ENCODE measurements at regions of chr2 and their contacts with region 1.

Region 1: DNA sequence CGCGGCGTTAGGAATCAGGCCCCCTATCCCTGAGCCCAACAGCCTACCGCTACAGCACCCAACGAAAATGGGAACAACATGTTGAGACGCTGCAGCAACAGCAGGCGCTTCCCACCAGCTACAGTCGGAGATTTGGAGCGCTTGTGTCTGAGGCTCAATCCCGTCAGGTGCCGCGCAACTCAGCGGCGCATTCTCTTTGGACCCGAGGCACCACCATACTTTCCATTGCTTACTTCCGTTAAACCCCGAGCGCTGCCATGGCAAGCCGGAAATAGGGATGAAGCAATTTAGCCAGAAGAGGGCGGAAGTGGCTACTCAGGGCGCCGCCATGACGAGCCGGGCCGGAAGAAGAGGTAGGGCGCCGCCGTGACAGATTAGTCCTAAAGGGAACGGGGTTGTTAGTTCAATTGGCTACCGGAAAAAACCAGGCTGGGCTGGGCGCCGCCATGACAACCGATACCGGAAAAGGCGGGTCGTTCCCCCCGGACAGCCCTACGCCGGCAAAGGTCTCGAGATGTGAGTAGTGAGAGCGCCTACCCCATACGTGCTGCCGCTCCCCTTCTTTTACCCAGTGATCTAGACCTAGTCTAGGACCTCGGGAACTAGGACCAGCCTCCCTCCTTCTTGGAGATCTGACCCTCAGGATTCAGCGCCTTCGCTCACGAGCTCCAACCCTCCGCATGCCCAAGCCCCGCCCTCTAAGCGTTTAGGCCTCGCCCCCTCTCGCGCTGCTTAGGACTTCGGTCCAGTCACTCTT is at the start of gene CHCHD5:
- DNase-seq: peak; percentile 89 to 97
- ATAC-seq: peak; percentile 88 to 92
- H3K4me3 ChIP-seq: peak within 1 kb of the TSS; percentile 55
- H3K27ac ChIP-seq: peak within 1 kb of the TSS; percentile 96 to 97
- H3K4me1 ChIP-seq: peaks cover 21% of the 10 kb centered on the region
- CTCF ChIP-seq: no peak
- EP300 ChIP-seq: no peak; a peak in 1 of 5 replicates
- POLR2A ChIP-seq: peak; percentile 57
- RAD21 ChIP-seq: no peak
- polyA plus RNA-seq, gene CHCHD5: 15.0 and 17.6 TPM in 2 replicates

Region 2: DNA sequence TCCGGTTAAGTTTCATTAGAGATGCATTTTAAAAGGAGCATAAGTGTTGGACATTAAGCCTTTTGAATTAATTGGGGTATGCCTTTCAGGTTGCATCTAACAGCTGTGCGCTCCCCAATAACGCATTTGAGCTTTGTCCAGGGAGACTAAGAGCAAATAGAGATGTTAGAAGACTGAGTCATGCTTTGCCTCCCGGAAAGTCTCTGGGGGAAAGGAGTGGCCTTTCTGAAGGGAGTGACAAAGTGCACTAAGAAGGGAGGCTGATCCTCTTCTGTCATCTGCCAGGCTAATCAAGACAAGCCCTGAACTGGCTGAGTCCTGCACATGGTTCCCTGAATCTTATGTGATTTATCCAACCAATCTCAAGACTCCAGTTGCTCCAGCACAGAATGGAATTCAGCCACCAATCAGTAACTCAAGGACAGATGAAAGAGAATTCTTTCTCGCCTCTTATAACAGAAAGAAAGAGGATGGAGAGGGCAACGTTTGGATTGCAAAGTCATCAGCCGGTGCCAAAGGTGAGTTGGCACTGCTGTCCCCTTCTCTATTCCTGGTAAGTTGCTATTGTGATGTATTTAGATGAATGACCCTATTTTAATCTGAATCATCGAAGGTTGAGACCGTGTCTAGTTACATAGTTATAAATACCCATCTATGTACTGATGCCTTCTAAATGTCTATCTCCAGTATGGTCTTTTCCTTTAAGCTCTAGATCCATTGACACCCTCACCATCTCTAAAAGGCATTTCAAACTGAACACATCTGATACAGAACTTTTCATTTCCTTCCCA is 90.3 kb before region 1 on chr2:
- CTCF ChIA-PET with region 1: interaction called, 4 read pairs
- POLR2A ChIA-PET with region 1: interaction called, 12 read pairs
- DNase-seq: peak; percentile 65 to 75
- ATAC-seq: peak; percentile 97 to 99
- H3K4me3 ChIP-seq: no peak overlapping the region
- H3K27ac ChIP-seq: peak overlapping the region; percentile 42 to 77
- H3K4me1 ChIP-seq: peaks cover 25% of the 10 kb centered on the region
- CTCF ChIP-seq: no peak
- EP300 ChIP-seq: no peak
- POLR2A ChIP-seq: no peak
- RAD21 ChIP-seq: no peak